Heart right ventricle (tissue), 16 donors: ENCODE measurements at regions of chr3 and their contacts with region 1.

Region 1: DNA sequence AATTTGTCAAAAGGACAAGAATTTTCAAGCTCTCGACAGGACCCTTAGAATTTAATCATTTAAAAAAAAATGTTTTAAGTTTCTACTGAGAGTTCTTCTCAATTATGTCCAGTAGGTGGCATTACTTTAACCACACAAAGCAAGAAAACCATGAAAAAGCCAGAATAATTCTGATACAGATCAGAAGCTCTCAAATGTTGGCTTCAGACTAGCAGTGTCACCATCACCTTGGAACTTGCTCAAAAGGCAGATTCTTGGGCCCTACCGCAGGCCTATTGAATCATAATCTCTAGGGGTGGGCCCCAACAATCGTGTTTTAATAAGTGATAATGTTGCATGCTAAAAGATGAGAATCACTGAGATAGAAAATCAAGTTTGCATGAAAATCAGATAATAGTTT is 99.5 kb upstream of the KCNMB2 start:
- DNase-seq: no peak
- ATAC-seq: no peak
- H3K4me3 ChIP-seq: no peak overlapping the region
- H3K27ac ChIP-seq: no peak overlapping the region
- H3K4me1 ChIP-seq: peaks cover 0 to 11% (median 0%) of the 10 kb centered on the region in 9 donors
- H3K27me3 ChIP-seq: no peaks in the 10 kb centered on the region
- CTCF ChIP-seq: peak; percentile 30 to 70 (median 56)

Region 2: DNA sequence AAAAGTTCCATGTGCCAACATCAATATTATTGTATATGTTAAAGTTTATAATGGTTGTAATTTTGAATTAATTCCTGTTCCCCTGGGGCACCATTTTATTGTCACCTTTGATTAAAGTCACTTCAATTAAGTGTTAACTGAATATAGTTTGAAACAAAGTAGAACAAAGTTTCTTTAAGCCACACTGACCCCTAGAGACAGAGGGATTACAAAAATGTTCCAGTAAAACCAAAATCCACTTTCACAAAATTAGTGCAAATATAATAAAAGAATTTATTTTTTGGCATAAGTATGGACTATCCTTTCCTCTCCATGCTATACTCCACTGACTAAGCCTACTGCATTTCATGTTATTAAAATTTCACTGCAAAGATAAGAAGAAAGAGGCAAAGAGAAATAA is 511.0 kb after region 1 on chr3:
- intact Hi-C with region 1: loop called in 4 of 10 experiments (anchors 5 kb)
- DNase-seq: no peak
- ATAC-seq: no peak
- H3K4me3 ChIP-seq: no peak overlapping the region
- H3K27ac ChIP-seq: no peak overlapping the region
- H3K4me1 ChIP-seq: no peaks in the 10 kb centered on the region
- H3K27me3 ChIP-seq: no peaks in the 10 kb centered on the region
- CTCF ChIP-seq: peak in 7 of 9 donors; percentile 26 to 59 (median 50)

Region 3: DNA sequence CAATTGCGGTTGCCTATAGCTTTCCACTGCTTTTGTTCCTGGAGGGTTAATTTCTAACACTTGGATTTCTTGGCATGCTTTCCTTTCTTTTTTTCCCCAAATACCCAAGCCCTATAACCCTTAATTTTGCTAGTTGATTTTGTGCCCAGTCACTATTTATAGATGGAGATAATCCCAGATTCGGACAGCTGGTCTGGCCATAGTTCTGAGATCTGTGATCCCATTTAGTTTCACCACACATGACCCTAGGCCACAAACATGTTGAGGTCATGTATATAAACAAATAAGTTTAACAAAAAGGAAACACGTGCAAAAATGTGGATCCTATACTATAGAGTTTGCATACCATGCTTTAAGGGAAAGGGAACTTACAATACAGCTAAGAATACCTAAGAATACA is 523.4 kb after region 1 on chr3:
- intact Hi-C with region 1: loop called in 9 of 10 experiments (anchors 2 to 10 kb)
- DNase-seq: no peak
- ATAC-seq: no peak
- H3K4me3 ChIP-seq: no peak overlapping the region
- H3K27ac ChIP-seq: no peak overlapping the region
- H3K4me1 ChIP-seq: peaks cover 0 to 4% (median 0%) of the 10 kb centered on the region in 9 donors
- H3K27me3 ChIP-seq: no peaks in the 10 kb centered on the region
- CTCF ChIP-seq: no peak

Region 4: GRCh38 chr3:178966299-178967176 is 529.8 kb after region 1 on chr3:
- intact Hi-C with region 1: loop called in 9 of 10 experiments (anchors 2 to 10 kb)
- DNase-seq: no peak
- ATAC-seq: peak in 5 of 8 donors; percentile 43 to 94 (median 61)
- H3K4me3 ChIP-seq: peak overlapping the region in 5 of 10 donors; percentile 8 to 29 (median 16)
- H3K27ac ChIP-seq: peak overlapping the region in 5 of 10 donors; percentile 13 to 55 (median 32)
- H3K4me1 ChIP-seq: peaks cover 0 to 20% (median 14%) of the 10 kb centered on the region in 9 donors
- H3K27me3 ChIP-seq: no peaks in the 10 kb centered on the region
- CTCF ChIP-seq: peak in 8 of 9 donors; percentile 34 to 76 (median 64)

Region 5: GRCh38 chr3:179666436-179667035 is 1229.8 kb after region 1 on chr3:
- intact Hi-C with region 1: no loop called
- DNase-seq: peak; percentile 73 to 78
- ATAC-seq: peak; percentile 68 to 89 (median 81)
- H3K4me3 ChIP-seq: no peak overlapping the region
- H3K27ac ChIP-seq: peak overlapping the region; percentile 18 to 77 (median 67)
- H3K4me1 ChIP-seq: peaks cover 7 to 83% (median 53%) of the 10 kb centered on the region in 9 donors
- H3K27me3 ChIP-seq: no peaks in the 10 kb centered on the region
- CTCF ChIP-seq: no peak